ENCODE measurements at regions of chr9 and their contacts with region 1.

Region 1: DNA sequence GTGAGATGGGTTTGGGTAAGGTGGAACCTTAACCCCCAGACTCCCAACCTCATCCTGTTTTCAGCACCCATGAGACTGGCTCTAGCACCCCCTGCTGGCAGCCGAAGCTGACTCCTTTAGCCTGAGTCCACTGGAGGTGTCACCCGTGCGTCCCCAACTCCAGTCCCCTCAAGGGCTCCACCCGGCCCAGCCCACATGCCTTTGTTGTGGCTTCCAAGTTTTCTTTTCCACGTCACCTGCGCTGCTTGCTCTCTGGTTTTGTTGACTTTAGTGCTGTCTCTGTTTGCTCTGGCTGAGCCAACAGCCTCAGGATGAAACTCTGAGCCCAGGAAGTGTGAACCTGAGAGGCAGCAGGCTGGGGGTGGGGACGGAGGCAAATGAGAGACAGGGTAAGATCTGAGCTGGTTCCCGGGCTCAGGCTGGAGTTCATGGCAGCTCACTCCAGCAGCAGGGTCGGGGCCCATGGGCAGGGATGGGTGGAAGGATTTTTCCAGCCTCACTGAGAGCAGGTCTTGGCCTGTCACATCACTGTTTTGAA is 13.2 kb upstream of the AQP7 start:
- DNase-seq: no peak
- H3K4me3 ChIP-seq: no peak overlapping the region
- CTCF ChIP-seq: peak; percentile 75

Region 2: DNA sequence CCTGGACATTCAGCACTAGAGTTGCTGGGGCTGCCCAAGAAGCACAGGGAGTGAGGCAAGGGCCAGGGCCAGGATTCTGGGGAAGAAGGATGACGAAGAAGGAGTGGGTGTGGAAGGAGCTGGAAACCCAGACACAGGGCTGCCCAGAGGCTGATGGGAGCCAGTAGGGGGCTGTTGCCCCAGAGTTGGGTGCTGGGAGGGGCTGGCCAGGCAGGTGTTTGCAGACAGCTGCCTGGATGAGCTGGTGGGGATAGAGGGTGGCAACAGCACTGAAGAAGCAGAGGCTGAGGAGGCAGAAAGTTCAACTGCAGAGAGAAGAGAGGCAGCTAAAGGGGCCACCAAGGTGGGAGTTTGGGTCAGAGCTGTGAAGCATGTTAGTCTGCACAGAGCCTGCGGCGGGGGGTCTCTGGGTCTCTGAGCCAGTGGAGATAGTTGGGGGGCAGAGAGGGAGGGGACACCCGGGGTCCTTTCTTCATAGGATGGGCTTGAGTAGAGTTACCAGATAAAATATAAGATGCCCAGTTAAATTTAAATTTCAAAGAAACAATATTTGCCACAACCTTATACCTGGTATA is 10.7 kb before region 1 on chr9:
- CTCF ChIA-PET with region 1: interaction called, 46 read pairs
- POLR2A ChIA-PET with region 1: no interaction called
- DNase-seq: no peak
- H3K4me3 ChIP-seq: no peak overlapping the region
- CTCF ChIP-seq: no peak

Region 3: DNA sequence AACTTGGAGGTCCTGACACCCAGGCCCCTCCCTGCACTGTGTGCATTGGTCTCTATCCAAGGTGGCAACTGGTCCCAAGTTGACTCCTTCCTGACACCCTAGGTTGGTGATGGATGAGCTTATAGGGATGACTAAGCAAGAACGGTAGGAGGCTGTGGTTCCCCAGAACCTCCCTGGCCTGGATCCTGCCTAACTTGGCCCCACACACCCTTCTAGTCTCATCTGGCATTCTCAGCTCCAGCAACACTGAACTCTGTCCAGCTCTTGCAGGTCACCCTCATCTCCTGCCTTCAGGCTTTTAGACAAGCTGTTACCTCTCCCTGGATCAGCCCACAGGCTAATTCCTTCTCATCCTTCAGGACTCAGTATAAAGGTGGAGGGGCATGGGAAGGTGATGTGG is 15.4 kb after region 1 on chr9:
- CTCF ChIA-PET with region 1: interaction called, 45 read pairs
- POLR2A ChIA-PET with region 1: no interaction called
- DNase-seq: no peak
- H3K4me3 ChIP-seq: no peak overlapping the region
- CTCF ChIP-seq: no peak

Region 4: GRCh38 chr9:33446946-33447798 is 31.6 kb after region 1 on chr9 and contains the start of gene AQP3:
- CTCF ChIA-PET with region 1: interaction called, 34 read pairs
- POLR2A ChIA-PET with region 1: no interaction called
- DNase-seq: no peak
- H3K4me3 ChIP-seq: peak within 1 kb of the TSS; percentile 52
- CTCF ChIP-seq: peak; percentile 45

Region 5: GRCh38 chr9:33452828-33453271 is 37.3 kb after region 1 on chr9:
- CTCF ChIA-PET with region 1: interaction called, 34 read pairs
- POLR2A ChIA-PET with region 1: no interaction called
- DNase-seq: peak; percentile 42
- H3K4me3 ChIP-seq: no peak overlapping the region
- CTCF ChIP-seq: peak; percentile 83

Measured in AG04449 (cell line).